Heart right ventricle (tissue), 16 donors: ENCODE measurements at regions of chr9 and their contacts with region 1.

Region 1: GRCh38 chr9:84851935-84852585 is 182.5 kb downstream of the NTRK2 start:
- DNase-seq: peak in 1 of 2 donors; percentile 66
- ATAC-seq: peak; percentile 51 to 87 (median 79)
- H3K4me3 ChIP-seq: no peak overlapping the region
- H3K27ac ChIP-seq: peak overlapping the region in 2 of 10 donors; percentile 31 to 41
- H3K4me1 ChIP-seq: peaks cover 5 to 40% (median 18%) of the 10 kb centered on the region in 9 donors
- H3K27me3 ChIP-seq: no peaks in the 10 kb centered on the region
- CTCF ChIP-seq: no peak

Region 2: DNA sequence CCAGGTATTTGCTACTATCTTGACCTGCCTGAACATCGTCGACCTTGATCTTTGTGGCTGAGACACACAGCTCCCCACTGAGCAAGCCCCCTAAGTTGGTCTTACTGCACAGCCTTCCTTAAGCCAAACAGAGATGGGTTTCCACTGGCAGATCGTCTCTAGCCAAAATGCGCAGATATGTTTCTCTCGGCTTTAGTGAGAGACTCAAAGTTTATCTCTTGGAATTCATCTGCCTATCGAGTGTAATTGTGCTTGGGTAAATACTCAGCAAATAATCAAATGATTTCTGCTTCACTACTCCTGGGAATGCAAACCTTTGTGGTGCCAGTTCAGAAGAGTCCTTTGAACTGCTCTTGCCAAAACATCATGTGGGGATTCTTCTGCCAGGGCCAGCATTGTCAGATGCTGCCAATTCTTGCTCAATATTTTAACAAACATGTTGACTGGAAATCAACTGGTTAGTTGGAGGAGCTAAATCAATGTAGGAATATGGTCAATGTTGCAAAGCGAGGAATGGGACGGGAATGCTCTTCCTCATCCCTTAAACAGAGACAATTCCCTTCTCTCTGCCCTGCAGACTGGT is 370.3 kb before region 1 on chr9:
- intact Hi-C with region 1: no loop called
- DNase-seq: no peak
- ATAC-seq: peak in 1 of 8 donors; percentile 31
- H3K4me3 ChIP-seq: no peak overlapping the region
- H3K27ac ChIP-seq: no peak overlapping the region
- H3K4me1 ChIP-seq: peaks cover 0 to 11% (median 4%) of the 10 kb centered on the region in 9 donors
- H3K27me3 ChIP-seq: no peaks in the 10 kb centered on the region
- CTCF ChIP-seq: no peak

Region 3: GRCh38 chr9:84947363-84947972 is 95.4 kb after region 1 on chr9:
- intact Hi-C with region 1: loop called in 1 of 10 experiments (anchors 10 kb)
- DNase-seq: no peak
- ATAC-seq: peak in 5 of 8 donors; percentile 24 to 81 (median 69)
- H3K4me3 ChIP-seq: no peak overlapping the region
- H3K27ac ChIP-seq: peak overlapping the region in 1 of 10 donors; percentile 21
- H3K4me1 ChIP-seq: peaks cover 0 to 34% (median 4%) of the 10 kb centered on the region in 9 donors
- H3K27me3 ChIP-seq: no peaks in the 10 kb centered on the region
- CTCF ChIP-seq: no peak